ENCODE measurements at regions of chr2 and their contacts with region 1.

Region 1: DNA sequence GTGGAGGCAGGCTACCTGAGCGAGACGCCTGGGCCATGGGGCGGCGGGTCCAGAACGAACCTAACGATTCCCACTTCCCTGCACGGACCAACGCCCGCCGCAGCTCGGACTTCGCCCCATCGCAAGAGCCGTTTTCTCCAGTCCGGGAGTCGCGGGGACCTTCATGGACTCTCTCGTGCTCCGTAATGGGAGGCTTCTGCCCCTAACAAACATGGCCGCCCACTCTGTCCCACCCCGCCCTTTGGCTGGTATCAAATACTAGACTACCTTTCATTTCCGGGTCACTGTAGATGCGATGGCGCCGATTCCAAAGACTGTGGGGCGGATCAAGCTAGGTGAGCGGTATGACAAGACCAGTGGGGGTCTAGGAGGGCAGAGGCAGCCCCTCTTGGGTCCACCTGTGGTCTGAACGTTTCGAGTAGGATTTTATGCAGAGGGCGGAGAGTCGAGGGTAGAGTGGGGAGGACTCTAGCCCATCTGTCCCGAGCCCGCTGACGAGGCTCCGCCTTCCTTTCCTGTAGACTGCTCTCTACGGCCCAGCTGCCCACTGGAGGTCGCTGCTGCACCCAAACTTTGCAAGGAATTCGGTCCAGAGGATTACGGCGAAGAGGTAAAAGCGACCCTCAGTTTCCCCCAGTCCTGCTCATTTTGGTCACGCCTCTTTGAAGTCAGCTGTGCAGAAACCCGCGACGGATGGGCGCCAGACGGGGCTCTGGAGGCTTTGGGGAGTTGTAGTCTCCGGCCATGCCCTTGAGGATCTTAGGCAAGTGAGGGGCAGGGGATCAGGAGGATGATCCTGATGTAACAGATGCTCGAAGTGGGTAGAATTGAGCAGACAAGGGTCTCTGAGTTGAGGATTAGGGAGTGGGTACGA is at the starts of genes CCDC142 and TTC31:
- DNase-seq: peak; percentile 85 to 97 (median 94)
- ATAC-seq: peak; percentile 93
- H3K4me3 ChIP-seq: peak within 1 kb of the TSS; percentile 81 to 97
- H3K4me3 Mint-ChIP-seq: peak within 1 kb of the TSS; percentile 97
- H3K27ac ChIP-seq: peak within 1 kb of the TSS; percentile 88 to 90
- H3K27ac Mint-ChIP-seq: peak within 1 kb of the TSS; percentile 99
- H3K4me1 ChIP-seq: peaks cover 25% of the 10 kb centered on the region
- H3K4me1 Mint-ChIP-seq: peaks cover 42% of the 10 kb centered on the region
- H3K27me3 ChIP-seq: no peaks in the 10 kb centered on the region
- H3K27me3 Mint-ChIP-seq: no peaks in the 10 kb centered on the region
- CTCF ChIP-seq: peak; percentile 74
- total RNA-seq, gene CCDC142: 12.6 to 13.6 TPM
- total RNA-seq, gene TTC31: 25.9 to 30.8 TPM

Region 2: GRCh38 chr2:74391580-74392448 is 91.2 kb before region 1 on chr2:
- CTCF ChIA-PET with region 1: interaction called, 9 read pairs
- POLR2A ChIA-PET with region 1: interaction called, 3 read pairs
- intact Hi-C with region 1: loop called (anchors 5 kb)
- DNase-seq: peak; percentile 91 to 98 (median 95)
- ATAC-seq: peak; percentile 90
- H3K4me3 ChIP-seq: peak overlapping the region; percentile 67 to 87
- H3K4me3 Mint-ChIP-seq: peak overlapping the region; percentile 99
- H3K27ac ChIP-seq: peak overlapping the region; percentile 87 to 96
- H3K27ac Mint-ChIP-seq: peak overlapping the region; percentile 100
- H3K4me1 ChIP-seq: peaks cover 20% of the 10 kb centered on the region
- H3K4me1 Mint-ChIP-seq: peaks cover 9% of the 10 kb centered on the region
- H3K27me3 ChIP-seq: no peaks in the 10 kb centered on the region
- H3K27me3 Mint-ChIP-seq: no peaks in the 10 kb centered on the region
- CTCF ChIP-seq: peak; percentile 96

Region 3: GRCh38 chr2:74458132-74458925 is 24.7 kb before region 1 on chr2 and contains the start of gene WBP1:
- CTCF ChIA-PET with region 1: interaction called, 58 read pairs
- POLR2A ChIA-PET with region 1: interaction called, 107 read pairs
- intact Hi-C with region 1: loop called (anchors 1 kb)
- DNase-seq: peak; percentile 96 to 100 (median 98)
- ATAC-seq: peak; percentile 77
- H3K4me3 ChIP-seq: peak within 1 kb of the TSS; percentile 84 to 95
- H3K4me3 Mint-ChIP-seq: peak within 1 kb of the TSS; percentile 97
- H3K27ac ChIP-seq: peak within 1 kb of the TSS; percentile 93 to 100
- H3K27ac Mint-ChIP-seq: peak within 1 kb of the TSS; percentile 99
- H3K4me1 ChIP-seq: peaks cover 34% of the 10 kb centered on the region
- H3K4me1 Mint-ChIP-seq: peaks cover 57% of the 10 kb centered on the region
- H3K27me3 ChIP-seq: no peaks in the 10 kb centered on the region
- H3K27me3 Mint-ChIP-seq: no peaks in the 10 kb centered on the region
- CTCF ChIP-seq: no peak
- total RNA-seq, gene WBP1: 68.5 to 70.6 TPM

Region 4: GRCh38 chr2:74472086-74472944 is 10.7 kb before region 1 on chr2 and contains the start of gene MRPL53:
- CTCF ChIA-PET with region 1: interaction called, 23 read pairs
- POLR2A ChIA-PET with region 1: interaction called, 72 read pairs
- intact Hi-C with region 1: loop called (anchors 1 kb)
- DNase-seq: peak; percentile 90 to 99 (median 98)
- ATAC-seq: peak; percentile 89
- H3K4me3 ChIP-seq: peak within 1 kb of the TSS; percentile 69 to 95
- H3K4me3 Mint-ChIP-seq: peak within 1 kb of the TSS; percentile 97
- H3K27ac ChIP-seq: peak within 1 kb of the TSS; percentile 78 to 94
- H3K27ac Mint-ChIP-seq: peak within 1 kb of the TSS; percentile 99
- H3K4me1 ChIP-seq: peaks cover 21% of the 10 kb centered on the region
- H3K4me1 Mint-ChIP-seq: peaks cover 23% of the 10 kb centered on the region
- H3K27me3 ChIP-seq: no peaks in the 10 kb centered on the region
- H3K27me3 Mint-ChIP-seq: no peaks in the 10 kb centered on the region
- CTCF ChIP-seq: no peak
- total RNA-seq, gene MRPL53: 48.6 to 59.0 TPM

Region 5: GRCh38 chr2:74553892-74554645 is 71.0 kb after region 1 on chr2 and contains the start of gene LOXL3:
- CTCF ChIA-PET with region 1: interaction called, 5 read pairs
- POLR2A ChIA-PET with region 1: no interaction called
- intact Hi-C with region 1: loop called in 1 of 2 experiments (anchors 1 kb)
- DNase-seq: peak in 6 of 9 experiments; percentile 58 to 87 (median 70)
- ATAC-seq: peak; percentile 63
- H3K4me3 ChIP-seq: peak within 1 kb of the TSS; percentile 97 to 100
- H3K4me3 Mint-ChIP-seq: peak within 1 kb of the TSS; percentile 91
- H3K27ac ChIP-seq: peak within 1 kb of the TSS; percentile 66 to 77
- H3K27ac Mint-ChIP-seq: peak within 1 kb of the TSS; percentile 84
- H3K4me1 ChIP-seq: peaks cover 17% of the 10 kb centered on the region
- H3K4me1 Mint-ChIP-seq: peaks cover 10% of the 10 kb centered on the region
- H3K27me3 ChIP-seq: peaks cover 2 to 11% of the 10 kb centered on the region in 2 experiments
- H3K27me3 Mint-ChIP-seq: peaks cover 19% of the 10 kb centered on the region
- CTCF ChIP-seq: no peak
- total RNA-seq, gene LOXL3: not detected

Region 6: GRCh38 chr2:74587664-74588277 is 104.7 kb after region 1 on chr2:
- CTCF ChIA-PET with region 1: interaction called, 102 read pairs
- POLR2A ChIA-PET with region 1: interaction called, 24 read pairs
- intact Hi-C with region 1: loop called (anchors 1 kb)
- DNase-seq: peak; percentile 36 to 79 (median 58)
- ATAC-seq: peak; percentile 87
- H3K4me3 ChIP-seq: no peak overlapping the region
- H3K4me3 Mint-ChIP-seq: no peak overlapping the region
- H3K27ac ChIP-seq: no peak overlapping the region
- H3K27ac Mint-ChIP-seq: no peak overlapping the region
- H3K4me1 ChIP-seq: no peaks in the 10 kb centered on the region
- H3K4me1 Mint-ChIP-seq: peaks cover 6% of the 10 kb centered on the region
- H3K27me3 ChIP-seq: no peaks in the 10 kb centered on the region
- H3K27me3 Mint-ChIP-seq: peaks cover 8% of the 10 kb centered on the region
- CTCF ChIP-seq: peak; percentile 52

Region 7: DNA sequence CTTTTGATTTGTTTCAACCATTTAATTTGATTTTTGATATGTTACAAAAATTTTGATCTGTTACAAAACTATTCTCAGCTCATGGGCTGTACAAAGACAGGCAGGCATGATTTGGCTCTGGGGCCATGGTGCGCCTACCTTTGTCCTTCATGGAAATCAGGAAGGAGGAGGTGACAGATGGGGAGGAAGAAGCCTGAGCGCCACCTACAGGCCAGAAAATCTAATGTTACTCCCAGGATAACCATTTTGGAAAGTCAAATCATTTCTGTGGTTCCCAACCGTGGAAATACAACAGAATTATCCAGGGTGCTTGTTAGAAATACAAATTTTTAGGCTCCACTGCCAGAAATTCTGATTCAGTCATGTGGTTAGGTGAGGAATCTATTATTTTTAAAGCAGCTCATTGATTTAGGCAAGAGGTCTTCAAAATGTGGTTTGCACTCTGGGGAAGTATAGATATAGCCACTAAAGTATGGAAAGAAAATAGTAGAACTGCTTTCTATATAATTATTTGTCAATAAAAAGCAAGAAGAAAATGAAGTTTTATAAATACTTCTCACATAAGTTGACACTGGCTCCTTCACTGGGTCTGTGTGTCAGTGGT is 983.8 kb after region 1 on chr2:
- CTCF ChIA-PET with region 1: no interaction called
- POLR2A ChIA-PET with region 1: no interaction called
- intact Hi-C with region 1: no loop called
- DNase-seq: peak in 3 of 9 experiments; percentile 6 to 32 (median 13)
- ATAC-seq: no peak
- H3K4me3 ChIP-seq: no peak overlapping the region
- H3K4me3 Mint-ChIP-seq: no peak overlapping the region
- H3K27ac ChIP-seq: no peak overlapping the region
- H3K27ac Mint-ChIP-seq: no peak overlapping the region
- H3K4me1 ChIP-seq: no peaks in the 10 kb centered on the region
- H3K4me1 Mint-ChIP-seq: no peaks in the 10 kb centered on the region
- H3K27me3 ChIP-seq: no peaks in the 10 kb centered on the region
- H3K27me3 Mint-ChIP-seq: peaks cover 11% of the 10 kb centered on the region
- CTCF ChIP-seq: peak; percentile 44

Measured in CD8-positive, alpha-beta T cell (primary cell).